MCF 10A (cell line): ENCODE measurements at regions of chr6 and their contacts with region 1.

Region 1: DNA sequence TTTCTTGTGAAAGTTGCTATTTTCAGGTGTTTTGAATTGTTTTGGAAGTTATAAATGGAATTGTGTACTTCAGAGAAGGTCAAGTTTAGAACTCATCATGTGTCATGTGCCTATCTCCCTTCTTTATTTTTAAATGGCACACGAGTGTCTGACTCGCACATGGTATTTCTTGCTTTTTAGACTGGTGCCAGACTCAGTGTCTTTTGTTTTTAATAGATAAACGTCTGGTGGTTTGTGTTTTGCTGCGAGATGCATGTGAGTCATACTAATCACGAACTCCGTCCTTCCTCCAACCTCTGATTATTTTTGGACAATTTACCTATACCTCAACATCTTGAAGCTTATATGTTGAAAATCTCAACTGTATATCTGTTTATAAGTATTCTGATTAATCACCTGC is 292.1 kb downstream of the CDKAL1 start:
- DNase-seq: peak; percentile 69
- H3K4me3 Mint-ChIP-seq: peak overlapping the region; percentile 20
- H3K27ac Mint-ChIP-seq: peak overlapping the region; percentile 92
- H3K4me1 Mint-ChIP-seq: peaks cover 26% of the 10 kb centered on the region
- H3K27me3 Mint-ChIP-seq: no peaks in the 10 kb centered on the region
- CTCF ChIP-seq: no peak

Region 2: DNA sequence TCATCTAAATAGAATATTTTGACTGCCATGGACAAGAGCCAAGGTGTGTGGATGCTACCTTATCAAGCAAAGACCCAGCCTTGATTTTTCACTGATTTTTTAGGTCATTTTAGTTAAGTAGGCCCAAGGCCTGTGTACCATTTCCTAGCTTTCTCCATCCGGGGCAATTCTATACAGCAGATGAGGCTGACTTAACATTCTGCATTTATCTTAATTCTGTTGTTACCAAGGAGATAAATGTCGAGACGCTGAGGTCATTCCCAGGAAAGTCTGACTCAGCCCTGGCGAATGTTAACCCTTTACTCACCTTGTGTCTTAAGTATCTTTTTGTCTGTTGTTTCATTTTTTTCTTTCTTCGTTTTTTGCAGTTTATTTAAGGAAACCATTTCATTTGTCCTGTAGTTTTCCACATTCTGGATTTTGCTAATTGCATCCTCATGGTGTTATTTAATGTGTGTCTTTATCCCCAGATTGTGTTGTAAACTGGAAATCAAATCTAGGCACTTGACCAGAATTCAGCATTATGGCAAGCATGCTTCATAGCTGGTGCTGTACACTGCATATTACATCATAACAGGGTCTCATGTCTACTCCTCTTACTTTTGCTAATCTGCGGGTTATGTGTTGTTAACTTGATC is 15.2 kb before region 1 on chr6:
- CTCF ChIA-PET with region 1: no interaction called
- POLR2A ChIA-PET with region 1: interaction called, 14 read pairs
- intact Hi-C with region 1: no loop called
- DNase-seq: peak; percentile 87
- H3K4me3 Mint-ChIP-seq: peak overlapping the region; percentile 1
- H3K27ac Mint-ChIP-seq: peak overlapping the region; percentile 77
- H3K4me1 Mint-ChIP-seq: peaks cover 21% of the 10 kb centered on the region
- H3K27me3 Mint-ChIP-seq: no peaks in the 10 kb centered on the region
- CTCF ChIP-seq: no peak

Region 3: GRCh38 chr6:21371676-21372161 is 545.3 kb after region 1 on chr6:
- CTCF ChIA-PET with region 1: no interaction called
- POLR2A ChIA-PET with region 1: no interaction called
- intact Hi-C with region 1: no loop called
- DNase-seq: peak; percentile 40
- H3K4me3 Mint-ChIP-seq: no peak overlapping the region
- H3K27ac Mint-ChIP-seq: peak overlapping the region; percentile 27
- H3K4me1 Mint-ChIP-seq: peaks cover 8% of the 10 kb centered on the region
- H3K27me3 Mint-ChIP-seq: no peaks in the 10 kb centered on the region
- CTCF ChIP-seq: no peak

Region 4: DNA sequence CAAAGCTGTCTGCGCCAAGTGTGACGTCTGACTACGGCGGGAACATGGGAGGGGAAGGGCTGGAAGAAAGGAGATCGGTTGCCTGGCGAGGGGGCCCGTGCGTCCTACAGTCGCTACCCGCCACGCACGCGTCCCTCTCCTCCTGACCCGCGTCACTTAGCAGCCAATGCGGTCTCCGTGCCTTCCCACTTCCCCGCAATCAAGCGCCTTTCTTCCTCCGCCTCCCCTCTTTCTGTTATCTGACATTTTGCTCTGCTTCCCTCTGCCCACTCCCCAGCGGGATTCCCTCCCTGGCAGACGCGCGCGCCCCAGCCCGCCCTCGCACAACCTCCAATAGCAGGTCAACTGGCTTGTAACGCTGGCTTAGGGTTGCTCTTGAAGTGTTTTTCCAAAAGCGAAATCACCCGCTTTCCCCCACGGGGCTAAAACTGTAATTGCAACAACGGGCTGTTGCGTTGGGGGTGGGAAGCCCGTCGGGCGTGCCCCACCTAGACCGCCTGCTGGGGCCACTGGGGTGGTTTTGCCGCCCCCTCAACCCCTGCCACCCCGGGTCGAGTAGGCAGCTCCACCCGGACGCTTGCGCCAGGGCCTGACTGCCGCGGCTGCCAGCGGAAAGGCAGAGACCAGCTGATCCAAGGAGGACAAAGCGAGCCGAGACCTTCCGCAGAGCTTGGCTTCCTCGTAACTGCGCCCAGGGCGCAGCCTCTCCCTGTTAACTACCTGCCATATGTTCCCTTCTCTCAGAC is 761.0 kb after region 1 on chr6:
- CTCF ChIA-PET with region 1: interaction called, 6 read pairs
- POLR2A ChIA-PET with region 1: interaction called, 10 read pairs
- intact Hi-C with region 1: no loop called
- DNase-seq: peak; percentile 64
- H3K4me3 Mint-ChIP-seq: peak overlapping the region; percentile 94
- H3K27ac Mint-ChIP-seq: peak overlapping the region; percentile 81
- H3K4me1 Mint-ChIP-seq: peaks cover 10% of the 10 kb centered on the region
- H3K27me3 Mint-ChIP-seq: no peaks in the 10 kb centered on the region
- CTCF ChIP-seq: peak; percentile 27